Vagina (tissue), 2 donors: ENCODE measurements at regions of chr20 and their contacts with region 1.

Region 1: DNA sequence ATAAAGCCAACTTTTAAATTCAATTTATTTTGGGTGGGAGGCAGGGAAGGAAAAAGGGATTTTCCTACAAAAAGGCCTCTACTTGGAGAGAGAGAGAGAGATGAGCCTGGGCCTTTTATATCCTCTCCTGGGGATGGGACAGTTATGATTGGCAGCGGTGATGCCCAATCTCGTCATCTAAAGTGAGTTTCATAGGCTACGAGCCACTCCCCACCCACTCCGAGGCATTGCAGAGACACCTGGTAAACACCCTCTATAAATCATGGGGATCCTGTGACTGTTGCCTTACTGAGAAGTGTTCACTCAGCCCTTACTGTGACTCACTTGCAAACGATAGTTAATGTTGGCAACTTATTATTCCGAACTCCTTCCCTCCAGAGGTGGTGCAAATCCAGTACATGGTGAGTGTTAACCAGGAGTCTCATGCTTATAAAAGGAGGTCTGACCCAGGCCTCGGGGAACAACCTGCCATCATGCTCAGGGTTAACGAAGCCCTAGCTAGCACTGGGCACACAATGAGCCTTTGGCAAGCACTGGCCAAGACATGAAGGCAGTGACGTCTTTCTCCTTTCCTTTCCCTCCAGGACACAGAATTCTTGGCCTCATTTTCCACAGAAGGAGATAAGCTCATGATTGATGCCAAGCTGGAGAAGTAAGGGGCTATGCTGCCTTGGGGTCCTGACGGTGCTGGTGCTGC is 20.5 kb downstream of the BPIFB4 start:
- DNase-seq: no peak
- H3K4me3 ChIP-seq: no peak overlapping the region
- H3K27ac ChIP-seq: no peak overlapping the region
- H3K4me1 ChIP-seq: no peaks in the 10 kb centered on the region
- H3K27me3 ChIP-seq: no peaks in the 10 kb centered on the region
- CTCF ChIP-seq: no peak
- POLR2A ChIP-seq: no peak

Region 2: GRCh38 chr20:32252189-32252588 is 847.8 kb before region 1 on chr20:
- intact Hi-C with region 1: loop called (anchors 5 kb)
- DNase-seq: no peak
- H3K4me3 ChIP-seq: no peak overlapping the region
- H3K27ac ChIP-seq: no peak overlapping the region
- H3K4me1 ChIP-seq: no peaks in the 10 kb centered on the region
- H3K27me3 ChIP-seq: no peaks in the 10 kb centered on the region
- CTCF ChIP-seq: no peak
- POLR2A ChIP-seq: no peak